IMR-90 (cell line): ENCODE measurements at regions of chr2 and their contacts with region 1.

Region 1: DNA sequence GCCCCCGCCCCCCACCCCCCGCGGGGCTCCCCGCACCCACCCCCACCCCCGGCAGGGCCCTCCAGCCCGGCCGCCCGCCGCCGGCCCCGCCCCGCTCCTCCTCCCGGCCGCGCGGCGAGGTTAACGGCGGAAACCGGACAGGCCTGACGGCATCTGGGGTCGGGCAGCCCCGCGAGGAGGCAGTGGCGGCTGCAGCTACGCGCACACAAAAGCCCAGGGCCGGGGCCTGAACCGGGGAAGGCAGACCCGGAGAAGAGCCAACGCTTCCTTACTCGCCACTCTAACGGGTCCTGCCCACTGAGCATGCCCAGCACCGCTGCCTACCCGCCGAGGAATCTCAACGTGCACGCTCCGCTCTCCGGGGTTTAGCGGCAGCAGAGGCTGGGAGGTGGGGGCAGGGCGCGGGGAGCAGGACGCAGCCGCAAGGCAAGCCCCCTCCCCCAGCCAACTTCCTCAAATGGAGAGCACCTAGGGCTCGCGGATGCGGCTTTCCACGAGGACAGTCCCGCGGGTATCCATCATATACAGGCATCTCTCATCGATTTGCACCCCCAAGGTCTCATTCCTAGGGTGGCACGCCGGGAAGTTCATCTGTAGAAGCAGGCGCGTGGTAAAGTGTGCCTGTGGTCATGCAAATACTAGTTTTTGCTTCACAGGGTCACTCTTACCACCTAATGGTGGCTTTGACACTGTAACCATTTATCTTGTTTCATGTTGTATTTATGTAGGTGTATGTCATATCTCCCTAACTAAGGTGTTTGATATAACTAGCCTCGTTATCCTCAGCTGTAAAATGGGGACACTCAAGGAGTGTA is at the start of gene MEMO1:
- DNase-seq: peak; percentile 92
- ATAC-seq: peak; percentile 81
- H3K4me3 ChIP-seq: peak within 1 kb of the TSS; percentile 99
- H3K27ac ChIP-seq: peak within 1 kb of the TSS; percentile 93
- H3K4me1 ChIP-seq: peaks cover 2% of the 10 kb centered on the region
- H3K27me3 ChIP-seq: no peaks in the 10 kb centered on the region
- CTCF ChIP-seq: 0 out of 2 replicates have a peak, but pooled peaks have one; percentile 12
- POLR2A ChIP-seq: peak; percentile 63
- RAD21 ChIP-seq: no peak; the same call in 1 of the 2 replicates
- total RNA-seq, gene MEMO1: 23.7 and 33.6 TPM in 2 replicates

Region 2: GRCh38 chr2:31764169-31764568 is 246.7 kb before region 1 on chr2:
- CTCF ChIA-PET with region 1: no interaction called
- POLR2A ChIA-PET with region 1: no interaction called
- dilution Hi-C with region 1: no loop called
- in situ Hi-C with region 1: no loop called
- intact Hi-C with region 1: no loop called
- DNase-seq: no peak
- ATAC-seq: no peak
- H3K4me3 ChIP-seq: no peak overlapping the region
- H3K27ac ChIP-seq: no peak overlapping the region
- H3K4me1 ChIP-seq: no peaks in the 10 kb centered on the region
- H3K27me3 ChIP-seq: no peaks in the 10 kb centered on the region
- CTCF ChIP-seq: no peak
- POLR2A ChIP-seq: no peak
- RAD21 ChIP-seq: no peak

Region 3: GRCh38 chr2:31835450-31835849 is 175.4 kb before region 1 on chr2:
- CTCF ChIA-PET with region 1: no interaction called
- POLR2A ChIA-PET with region 1: no interaction called
- dilution Hi-C with region 1: no loop called
- in situ Hi-C with region 1: no loop called
- intact Hi-C with region 1: loop called (anchors 5 kb)
- DNase-seq: no peak
- ATAC-seq: no peak
- H3K4me3 ChIP-seq: no peak overlapping the region
- H3K27ac ChIP-seq: no peak overlapping the region
- H3K4me1 ChIP-seq: no peaks in the 10 kb centered on the region
- H3K27me3 ChIP-seq: no peaks in the 10 kb centered on the region
- CTCF ChIP-seq: no peak
- POLR2A ChIP-seq: no peak
- RAD21 ChIP-seq: no peak

Region 4: DNA sequence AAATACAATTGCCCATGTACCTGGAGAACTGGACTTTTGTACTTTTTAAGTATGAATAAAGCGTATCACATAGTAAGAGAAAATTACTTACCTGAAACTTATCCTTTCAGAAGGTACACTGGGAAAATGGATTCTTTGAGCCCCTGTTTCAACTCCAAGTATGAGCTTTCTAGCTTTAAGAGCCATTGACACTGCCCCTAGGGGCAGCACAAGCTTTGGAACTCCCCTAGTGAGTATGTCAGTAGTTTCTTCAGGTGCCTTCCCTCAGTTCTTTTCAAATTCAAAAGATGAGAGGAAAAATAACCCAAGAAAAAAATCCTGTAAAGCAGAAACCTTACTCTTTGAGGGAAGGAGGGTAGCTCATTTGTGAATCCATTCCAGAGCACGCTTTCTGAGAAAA is 124.2 kb before region 1 on chr2:
- CTCF ChIA-PET with region 1: no interaction called
- POLR2A ChIA-PET with region 1: no interaction called
- dilution Hi-C with region 1: no loop called
- in situ Hi-C with region 1: no loop called
- intact Hi-C with region 1: loop called (anchors 5 kb)
- DNase-seq: no peak
- ATAC-seq: no peak
- H3K4me3 ChIP-seq: no peak overlapping the region
- H3K27ac ChIP-seq: no peak overlapping the region
- H3K4me1 ChIP-seq: peaks cover 2% of the 10 kb centered on the region; the same call in 1 of the 2 replicates
- H3K27me3 ChIP-seq: no peaks in the 10 kb centered on the region
- CTCF ChIP-seq: no peak
- POLR2A ChIP-seq: no peak
- RAD21 ChIP-seq: 0 out of 2 replicates have a peak, but pooled peaks have one; percentile 4

Region 5: GRCh38 chr2:31945572-31945935 is 65.3 kb before region 1 on chr2:
- CTCF ChIA-PET with region 1: no interaction called
- POLR2A ChIA-PET with region 1: interaction called, 4 read pairs
- dilution Hi-C with region 1: no loop called
- in situ Hi-C with region 1: no loop called
- intact Hi-C with region 1: loop called (anchors 10 kb)
- DNase-seq: peak; percentile 5
- ATAC-seq: no peak
- H3K4me3 ChIP-seq: no peak overlapping the region
- H3K27ac ChIP-seq: no peak overlapping the region
- H3K4me1 ChIP-seq: no peaks in the 10 kb centered on the region
- H3K27me3 ChIP-seq: no peaks in the 10 kb centered on the region
- CTCF ChIP-seq: no peak
- POLR2A ChIP-seq: no peak
- RAD21 ChIP-seq: no peak

Region 6: GRCh38 chr2:32063310-32064161 is 52.7 kb after region 1 on chr2 and contains the start of gene SPAST:
- CTCF ChIA-PET with region 1: no interaction called
- POLR2A ChIA-PET with region 1: interaction called, 4 read pairs
- dilution Hi-C with region 1: no loop called
- in situ Hi-C with region 1: no loop called
- intact Hi-C with region 1: loop called (anchors 1 kb)
- DNase-seq: peak; percentile 95
- ATAC-seq: peak; percentile 94
- H3K4me3 ChIP-seq: peak within 1 kb of the TSS; percentile 58
- H3K27ac ChIP-seq: peak within 1 kb of the TSS; percentile 75
- H3K4me1 ChIP-seq: peaks cover 2% of the 10 kb centered on the region; the same call in 1 of the 2 replicates
- H3K27me3 ChIP-seq: no peaks in the 10 kb centered on the region
- CTCF ChIP-seq: peak; percentile 51
- POLR2A ChIP-seq: no peak; the same call in 1 of the 2 replicates
- RAD21 ChIP-seq: peak; percentile 27; the same call in 1 of the 2 replicates
- total RNA-seq, gene SPAST: 14.5 and 21.1 TPM in 2 replicates

Region 7: GRCh38 chr2:32697156-32697555 is 686.3 kb after region 1 on chr2:
- CTCF ChIA-PET with region 1: no interaction called
- POLR2A ChIA-PET with region 1: no interaction called
- dilution Hi-C with region 1: no loop called
- in situ Hi-C with region 1: no loop called
- intact Hi-C with region 1: no loop called
- DNase-seq: peak; percentile 91
- ATAC-seq: peak; percentile 85
- H3K4me3 ChIP-seq: no peak overlapping the region
- H3K27ac ChIP-seq: no peak overlapping the region
- H3K4me1 ChIP-seq: peaks cover 3% of the 10 kb centered on the region; the same call in 1 of the 2 replicates
- H3K27me3 ChIP-seq: no peaks in the 10 kb centered on the region
- CTCF ChIP-seq: no peak
- POLR2A ChIP-seq: no peak
- RAD21 ChIP-seq: no peak